Left cardiac atrium (tissue), 4 donors: ENCODE measurements at regions of chr4 and their contacts with region 1.

Region 1: GRCh38 chr4:20684852-20685763 is 15.2 kb upstream of the PACRGL start:
- DNase-seq: no peak
- ATAC-seq: no peak

Region 2: GRCh38 chr4:18689308-18690115 is 1995.6 kb before region 1 on chr4:
- intact Hi-C with region 1: loop called in 1 of 2 experiments (anchors 10 kb)
- DNase-seq: no peak
- ATAC-seq: peak; percentile 36 to 61

Region 3: GRCh38 chr4:19224820-19225219 is 1460.3 kb before region 1 on chr4:
- intact Hi-C with region 1: loop called in 1 of 2 experiments (anchors 10 kb)
- DNase-seq: no peak
- ATAC-seq: no peak

Region 4: GRCh38 chr4:20422398-20422797 is 262.7 kb before region 1 on chr4:
- intact Hi-C with region 1: loop called in 1 of 2 experiments (anchors 2 kb)
- DNase-seq: peak; percentile 33
- ATAC-seq: peak; percentile 53 to 80

Region 5: DNA sequence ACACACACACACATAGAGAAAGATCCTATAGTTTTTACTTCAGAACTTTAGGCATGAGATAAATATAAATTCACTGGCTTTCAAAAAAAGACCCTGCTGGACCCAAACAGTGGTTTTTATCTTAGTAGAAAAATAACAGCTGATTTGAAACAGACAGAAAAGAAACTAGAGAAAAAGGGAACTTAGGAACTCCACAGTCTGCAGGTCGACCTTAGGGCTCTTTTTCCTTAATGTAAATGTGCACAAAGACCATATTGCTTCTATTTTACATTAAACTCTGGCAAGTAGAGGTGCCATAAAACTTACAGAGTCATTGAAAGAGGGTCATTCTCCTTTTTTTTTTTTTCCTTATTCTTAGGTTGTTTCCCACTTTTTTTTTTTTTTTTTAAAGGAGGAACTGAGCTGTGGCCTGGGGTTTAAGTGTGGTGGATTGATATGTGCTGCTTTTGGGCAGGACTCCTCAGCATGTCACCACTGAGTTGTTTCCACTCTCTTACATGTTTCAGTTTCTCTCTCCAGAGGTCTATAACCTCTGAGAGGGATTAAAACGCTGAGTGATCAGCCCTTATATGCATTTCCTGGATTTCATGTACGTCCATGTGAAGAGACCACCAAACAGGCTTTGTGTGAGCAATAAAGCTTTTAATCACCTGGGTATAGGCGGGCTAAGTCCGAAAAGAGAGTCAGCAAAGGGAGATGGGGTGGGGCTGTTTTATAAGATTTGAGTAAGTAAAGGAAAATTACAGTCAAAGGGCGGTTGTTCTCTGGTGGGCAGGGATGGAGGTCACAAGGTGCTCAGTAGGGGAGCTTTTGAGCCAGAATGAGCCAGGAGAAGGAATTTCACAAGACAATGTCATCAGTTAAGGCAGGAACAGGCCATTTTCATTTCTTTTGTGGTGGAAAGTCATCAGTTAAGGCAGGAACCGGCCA is 55.7 kb before region 1 on chr4:
- intact Hi-C with region 1: no loop called
- DNase-seq: no peak
- ATAC-seq: no peak